Calu3 (cell line): ENCODE measurements at regions of chr4 and their contacts with region 1.

Region 1: GRCh38 chr4:97493815-97494518 is 649.3 kb downstream of the STPG2 start:
- DNase-seq: no peak
- H3K4me3 Mint-ChIP-seq: no peak overlapping the region
- H3K27ac Mint-ChIP-seq: peak overlapping the region; percentile 63
- H3K4me1 Mint-ChIP-seq: peaks cover 18% of the 10 kb centered on the region
- H3K27me3 Mint-ChIP-seq: no peaks in the 10 kb centered on the region
- CTCF ChIP-seq: no peak

Region 2: DNA sequence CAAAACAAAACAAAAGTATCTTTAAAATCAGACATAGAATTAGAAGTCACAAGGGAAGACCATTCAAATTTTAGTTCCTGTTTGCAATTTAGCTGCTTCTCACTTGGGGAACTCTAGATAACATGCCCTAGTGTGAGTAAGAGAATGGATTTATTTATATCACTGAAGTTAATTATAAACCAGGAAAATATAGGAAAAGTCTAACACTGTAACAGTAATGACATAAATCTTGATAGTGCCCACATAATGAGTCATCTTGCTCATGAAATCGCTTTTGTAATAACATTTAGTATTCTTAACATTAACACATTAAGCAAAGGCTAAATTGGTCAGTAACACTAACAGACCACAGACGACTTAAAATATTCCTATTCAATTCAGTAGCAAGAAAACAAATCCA is 61.4 kb before region 1 on chr4:
- CTCF ChIA-PET with region 1: no interaction called
- intact Hi-C with region 1: loop called (anchors 2 kb)
- DNase-seq: no peak
- H3K4me3 Mint-ChIP-seq: no peak overlapping the region
- H3K27ac Mint-ChIP-seq: peak overlapping the region; percentile 42
- H3K4me1 Mint-ChIP-seq: no peaks in the 10 kb centered on the region
- H3K27me3 Mint-ChIP-seq: no peaks in the 10 kb centered on the region
- CTCF ChIP-seq: no peak

Region 3: GRCh38 chr4:97457253-97457652 is 36.7 kb before region 1 on chr4:
- CTCF ChIA-PET with region 1: no interaction called
- intact Hi-C with region 1: loop called (anchors 5 kb)
- DNase-seq: no peak
- H3K4me3 Mint-ChIP-seq: no peak overlapping the region
- H3K27ac Mint-ChIP-seq: peak overlapping the region; percentile 64
- H3K4me1 Mint-ChIP-seq: peaks cover 17% of the 10 kb centered on the region
- H3K27me3 Mint-ChIP-seq: no peaks in the 10 kb centered on the region
- CTCF ChIP-seq: no peak

Region 4: GRCh38 chr4:99276417-99276816 is 1782.5 kb after region 1 on chr4:
- CTCF ChIA-PET with region 1: no interaction called
- intact Hi-C with region 1: no loop called
- DNase-seq: no peak
- H3K4me3 Mint-ChIP-seq: no peak overlapping the region
- H3K27ac Mint-ChIP-seq: no peak overlapping the region
- H3K4me1 Mint-ChIP-seq: no peaks in the 10 kb centered on the region
- H3K27me3 Mint-ChIP-seq: no peaks in the 10 kb centered on the region
- CTCF ChIP-seq: no peak